ENCODE measurements at regions of chr12 and their contacts with region 1.

Region 1: DNA sequence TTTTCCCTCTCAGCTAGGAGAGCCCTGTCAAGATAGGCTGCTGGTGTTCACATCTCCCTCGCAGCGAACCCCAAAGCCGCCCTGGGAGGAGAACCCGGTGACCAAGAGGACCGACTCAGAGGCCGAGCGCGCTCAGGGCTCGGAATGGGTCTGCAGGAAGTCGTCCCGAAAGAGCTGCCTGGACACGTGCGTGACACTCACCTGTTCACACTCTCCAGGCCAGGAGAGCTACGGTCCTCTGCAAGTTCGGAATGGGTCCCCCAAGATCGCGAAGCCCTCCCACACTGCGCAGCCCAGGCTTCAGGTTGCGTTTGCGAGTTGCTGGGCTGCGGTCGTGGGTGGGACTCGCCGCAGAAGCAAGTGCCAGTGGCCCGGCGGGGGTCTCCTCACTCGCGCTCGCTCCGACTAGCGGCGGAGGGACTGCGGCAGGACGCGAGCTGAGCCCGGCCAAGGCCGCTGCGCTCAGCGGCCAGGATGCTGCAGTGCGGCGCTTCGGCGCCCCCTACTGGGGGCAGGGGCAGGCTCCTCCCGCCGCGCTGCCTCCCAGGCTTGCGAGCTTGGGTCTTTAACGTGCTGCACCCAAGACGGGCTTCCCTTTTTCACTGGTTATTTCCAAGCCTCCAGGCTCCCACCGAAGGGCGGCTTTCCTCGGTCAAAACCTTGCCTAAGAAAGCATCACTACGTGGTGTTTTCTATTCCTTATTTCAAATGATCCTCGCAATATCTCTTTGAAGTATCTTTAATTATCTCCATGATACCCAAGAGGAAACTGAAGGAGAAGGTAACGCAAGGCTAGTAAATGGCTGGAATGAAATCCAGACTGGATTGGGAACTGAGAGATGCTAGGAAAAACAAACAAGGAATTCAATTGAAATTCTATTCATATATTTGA is at the start of gene RERG:
- DNase-seq: peak; percentile 54
- H3K4me3 ChIP-seq: peak within 1 kb of the TSS in 2 of 3 experiments; percentile 19 to 43
- H3K27ac ChIP-seq: no peak within 1 kb of the TSS
- H3K4me1 ChIP-seq: peaks cover 4% of the 10 kb centered on the region
- H3K27me3 ChIP-seq: no peaks in the 10 kb centered on the region
- CTCF ChIP-seq: peak; percentile 73 to 99
- total RNA-seq, gene RERG: 0.17 TPM in 1 of 2 donors, not detected in the other

Region 2: GRCh38 chr12:14723763-14724162 is 497.5 kb before region 1 on chr12:
- CTCF ChIA-PET with region 1: no interaction called
- dilution Hi-C with region 1: no loop called
- in situ Hi-C with region 1: no loop called
- intact Hi-C with region 1: loop called (anchors 1 kb)
- DNase-seq: peak; percentile 41
- H3K4me3 ChIP-seq: no peak overlapping the region
- H3K27ac ChIP-seq: no peak overlapping the region
- H3K4me1 ChIP-seq: no peaks in the 10 kb centered on the region
- H3K27me3 ChIP-seq: no peaks in the 10 kb centered on the region
- CTCF ChIP-seq: peak; percentile 75 to 78

Region 3: GRCh38 chr12:14845350-14845750 is 375.9 kb before region 1 on chr12:
- CTCF ChIA-PET with region 1: no interaction called
- dilution Hi-C with region 1: no loop called
- in situ Hi-C with region 1: loop called in 1 of 2 experiments (anchors 25 kb)
- intact Hi-C with region 1: loop called (anchors 1 kb)
- DNase-seq: peak; percentile 42
- H3K4me3 ChIP-seq: no peak overlapping the region
- H3K27ac ChIP-seq: no peak overlapping the region
- H3K4me1 ChIP-seq: peaks cover 22% of the 10 kb centered on the region
- H3K27me3 ChIP-seq: no peaks in the 10 kb centered on the region
- CTCF ChIP-seq: peak; percentile 74 to 81

Region 4: DNA sequence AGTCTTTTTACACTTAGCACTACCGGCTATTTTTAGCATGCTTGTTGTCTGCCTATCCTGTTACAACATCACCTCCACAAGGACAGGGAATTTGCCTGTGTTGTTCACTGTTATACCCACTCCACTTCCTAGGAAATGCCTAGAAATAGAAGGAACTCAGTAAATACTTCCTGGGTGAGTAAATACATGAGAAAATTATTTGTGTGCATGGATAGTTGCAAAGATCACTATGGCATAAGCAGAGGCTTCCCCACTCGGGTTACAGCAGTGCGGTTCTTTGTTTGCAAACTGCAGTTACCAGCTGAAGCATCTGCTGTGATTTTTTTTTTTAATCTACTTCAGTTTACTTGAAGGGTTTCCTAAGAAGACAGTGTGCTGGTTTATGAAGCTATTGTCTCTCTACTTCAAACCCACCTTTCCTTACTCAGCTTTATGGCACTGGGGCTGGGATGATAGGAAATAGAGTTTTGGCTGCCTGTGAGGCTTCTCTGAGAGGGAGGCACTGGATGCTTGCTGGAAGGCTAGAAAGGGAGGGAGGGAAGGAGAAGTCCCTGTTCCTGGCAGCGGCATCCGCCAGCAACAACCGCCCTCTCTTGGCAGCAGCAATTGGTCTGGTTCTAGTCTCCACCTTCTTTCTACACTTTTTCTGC is 219.4 kb before region 1 on chr12:
- CTCF ChIA-PET with region 1: no interaction called
- dilution Hi-C with region 1: no loop called
- in situ Hi-C with region 1: loop called in 1 of 2 experiments (anchors 25 kb)
- intact Hi-C with region 1: loop called (anchors 5 kb)
- DNase-seq: no peak
- H3K4me3 ChIP-seq: no peak overlapping the region
- H3K27ac ChIP-seq: no peak overlapping the region
- H3K4me1 ChIP-seq: peaks cover 2% of the 10 kb centered on the region
- H3K27me3 ChIP-seq: no peaks in the 10 kb centered on the region
- CTCF ChIP-seq: no peak

Region 5: GRCh38 chr12:15181017-15181683 is 40.1 kb before region 1 on chr12:
- CTCF ChIA-PET with region 1: no interaction called
- dilution Hi-C with region 1: no loop called
- in situ Hi-C with region 1: loop called in 1 of 2 experiments (anchors 5 kb)
- intact Hi-C with region 1: loop called (anchors 1 kb)
- DNase-seq: no peak
- H3K4me3 ChIP-seq: no peak overlapping the region
- H3K27ac ChIP-seq: no peak overlapping the region
- H3K4me1 ChIP-seq: no peaks in the 10 kb centered on the region
- H3K27me3 ChIP-seq: no peaks in the 10 kb centered on the region
- CTCF ChIP-seq: no peak

Region 6: DNA sequence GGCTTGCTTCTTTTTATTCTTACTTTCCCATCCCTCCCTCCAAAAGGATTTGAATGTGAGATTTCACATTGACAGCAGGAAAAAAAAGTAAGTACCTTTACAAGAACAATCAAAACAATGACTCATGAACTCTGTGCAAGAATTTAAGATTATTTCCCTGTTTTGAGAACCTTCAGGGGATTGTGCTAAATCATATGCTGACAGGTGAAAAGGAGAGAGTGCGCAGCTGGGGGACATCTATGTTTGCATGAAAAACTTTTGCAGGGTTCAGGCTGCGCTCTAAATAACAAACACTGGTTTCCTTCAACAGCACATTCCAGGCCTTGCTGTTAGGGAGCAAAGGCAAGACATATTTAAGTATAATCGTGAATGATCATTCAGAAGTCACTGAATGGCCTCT is 27.3 kb before region 1 on chr12:
- CTCF ChIA-PET with region 1: no interaction called
- dilution Hi-C with region 1: no loop called
- in situ Hi-C with region 1: no loop called
- intact Hi-C with region 1: no loop called
- DNase-seq: no peak
- H3K4me3 ChIP-seq: no peak overlapping the region
- H3K27ac ChIP-seq: no peak overlapping the region
- H3K4me1 ChIP-seq: no peaks in the 10 kb centered on the region
- H3K27me3 ChIP-seq: no peaks in the 10 kb centered on the region
- CTCF ChIP-seq: no peak

Measured in mammary epithelial cell (primary cell).